Activated B cell treated with CpG ODN at 0.5 μM for 24 hours (primary cell): ENCODE measurements at regions of chr3 and their contacts with region 1.

Region 1: GRCh38 chr3:130892759-130893375 is 1.0 kb upstream of the ATP2C1 start:
- DNase-seq: no peak
- ATAC-seq: peak; percentile 43
- H3K4me3 Mint-ChIP-seq: peak overlapping the region; percentile 95
- H3K27ac Mint-ChIP-seq: peak overlapping the region; percentile 99
- H3K4me1 Mint-ChIP-seq: peaks cover 31% of the 10 kb centered on the region
- H3K27me3 Mint-ChIP-seq: peaks cover 1% of the 10 kb centered on the region
- CTCF ChIP-seq: peak; percentile 30

Region 2: GRCh38 chr3:130699765-130700164 is 193.1 kb before region 1 on chr3:
- CTCF ChIA-PET with region 1: no interaction called
- POLR2A ChIA-PET with region 1: no interaction called
- intact Hi-C with region 1: loop called (anchors 1 kb)
- DNase-seq: no peak
- ATAC-seq: no peak
- H3K4me3 Mint-ChIP-seq: no peak overlapping the region
- H3K27ac Mint-ChIP-seq: no peak overlapping the region
- H3K4me1 Mint-ChIP-seq: no peaks in the 10 kb centered on the region
- H3K27me3 Mint-ChIP-seq: no peaks in the 10 kb centered on the region
- CTCF ChIP-seq: no peak

Region 3: DNA sequence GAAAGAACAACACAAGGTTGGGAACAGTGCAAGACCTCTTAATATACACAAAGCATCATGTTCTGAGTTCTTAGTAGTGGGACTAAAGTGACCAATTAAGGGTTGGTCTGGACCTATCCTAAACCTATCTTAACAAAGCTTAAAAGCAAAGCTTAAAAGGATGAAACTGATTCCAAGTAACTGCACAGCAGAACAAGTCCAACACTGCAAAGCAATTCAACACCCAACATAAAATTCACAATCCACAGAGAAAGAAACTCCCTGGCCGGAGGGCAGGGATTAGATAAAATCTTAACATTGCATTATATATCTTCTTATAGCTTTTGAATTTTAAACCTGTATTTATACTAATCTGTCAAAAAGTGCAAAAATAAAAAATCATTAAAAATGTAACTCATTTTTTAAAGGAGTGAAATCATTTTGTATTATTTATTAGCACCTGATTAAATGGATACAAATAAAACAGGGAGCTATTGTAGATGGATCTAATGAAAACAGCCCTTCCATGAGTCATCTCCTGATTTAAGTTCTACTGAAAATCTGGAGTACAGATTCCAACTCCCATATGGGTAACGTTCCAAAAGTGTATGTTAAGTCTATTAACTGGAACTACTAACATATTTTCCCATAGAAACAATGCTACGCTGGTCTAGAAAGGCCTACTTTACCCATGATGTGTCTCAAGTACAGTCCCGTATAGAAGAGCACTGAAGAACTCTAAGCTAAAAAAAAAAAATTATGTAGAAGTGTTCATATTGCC is 181.1 kb before region 1 on chr3:
- CTCF ChIA-PET with region 1: no interaction called
- POLR2A ChIA-PET with region 1: no interaction called
- intact Hi-C with region 1: no loop called
- DNase-seq: no peak
- ATAC-seq: no peak
- H3K4me3 Mint-ChIP-seq: no peak overlapping the region
- H3K27ac Mint-ChIP-seq: no peak overlapping the region
- H3K4me1 Mint-ChIP-seq: no peaks in the 10 kb centered on the region
- H3K27me3 Mint-ChIP-seq: no peaks in the 10 kb centered on the region
- CTCF ChIP-seq: no peak

Region 4: GRCh38 chr3:130759699-130760338 is 133.0 kb before region 1 on chr3:
- CTCF ChIA-PET with region 1: interaction called, 20 read pairs
- POLR2A ChIA-PET with region 1: interaction called, 13 read pairs
- intact Hi-C with region 1: loop called (anchors 1 kb)
- DNase-seq: no peak
- ATAC-seq: peak; percentile 57
- H3K4me3 Mint-ChIP-seq: no peak overlapping the region
- H3K27ac Mint-ChIP-seq: no peak overlapping the region
- H3K4me1 Mint-ChIP-seq: no peaks in the 10 kb centered on the region
- H3K27me3 Mint-ChIP-seq: peaks cover 12% of the 10 kb centered on the region
- CTCF ChIP-seq: no peak

Region 5: DNA sequence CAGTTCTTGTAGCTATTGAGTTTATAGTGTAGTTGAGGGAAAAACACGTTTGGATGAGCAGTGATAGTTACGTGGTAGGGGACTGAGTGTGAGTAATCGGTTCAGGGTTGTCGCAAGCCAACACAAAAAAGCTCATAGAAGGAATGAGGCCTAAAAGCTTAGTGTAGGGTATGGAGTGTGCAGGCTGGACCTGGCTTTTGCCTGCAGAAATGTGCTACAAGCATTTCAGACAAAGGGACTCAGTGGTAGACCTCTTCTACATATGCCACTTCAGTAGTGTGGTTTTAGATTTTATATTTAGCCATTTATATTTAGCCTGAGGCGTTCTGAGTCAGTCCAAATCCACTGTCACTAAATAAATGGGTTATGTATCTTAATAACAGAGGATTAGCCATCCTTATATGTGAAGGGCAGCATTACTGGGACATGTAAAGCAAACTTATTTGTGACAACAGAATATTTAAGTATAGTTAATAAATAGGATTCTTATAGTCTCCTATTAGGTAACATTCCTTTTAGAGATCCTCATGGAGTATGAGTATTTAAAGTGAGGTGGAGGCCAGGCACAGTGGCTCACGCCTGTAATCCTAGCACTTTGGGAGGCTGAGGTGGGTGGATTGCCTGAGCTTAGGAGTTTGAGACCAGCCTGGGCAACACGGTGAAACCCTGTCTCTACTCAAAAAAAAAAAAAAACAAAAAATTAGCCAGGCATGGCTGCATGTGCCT is 22.9 kb after region 1 on chr3:
- CTCF ChIA-PET with region 1: interaction called, 5 read pairs
- POLR2A ChIA-PET with region 1: interaction called, 13 read pairs
- intact Hi-C with region 1: no loop called
- DNase-seq: no peak
- ATAC-seq: no peak
- H3K4me3 Mint-ChIP-seq: no peak overlapping the region
- H3K27ac Mint-ChIP-seq: no peak overlapping the region
- H3K4me1 Mint-ChIP-seq: peaks cover 48% of the 10 kb centered on the region
- H3K27me3 Mint-ChIP-seq: no peaks in the 10 kb centered on the region
- CTCF ChIP-seq: no peak

Region 6: DNA sequence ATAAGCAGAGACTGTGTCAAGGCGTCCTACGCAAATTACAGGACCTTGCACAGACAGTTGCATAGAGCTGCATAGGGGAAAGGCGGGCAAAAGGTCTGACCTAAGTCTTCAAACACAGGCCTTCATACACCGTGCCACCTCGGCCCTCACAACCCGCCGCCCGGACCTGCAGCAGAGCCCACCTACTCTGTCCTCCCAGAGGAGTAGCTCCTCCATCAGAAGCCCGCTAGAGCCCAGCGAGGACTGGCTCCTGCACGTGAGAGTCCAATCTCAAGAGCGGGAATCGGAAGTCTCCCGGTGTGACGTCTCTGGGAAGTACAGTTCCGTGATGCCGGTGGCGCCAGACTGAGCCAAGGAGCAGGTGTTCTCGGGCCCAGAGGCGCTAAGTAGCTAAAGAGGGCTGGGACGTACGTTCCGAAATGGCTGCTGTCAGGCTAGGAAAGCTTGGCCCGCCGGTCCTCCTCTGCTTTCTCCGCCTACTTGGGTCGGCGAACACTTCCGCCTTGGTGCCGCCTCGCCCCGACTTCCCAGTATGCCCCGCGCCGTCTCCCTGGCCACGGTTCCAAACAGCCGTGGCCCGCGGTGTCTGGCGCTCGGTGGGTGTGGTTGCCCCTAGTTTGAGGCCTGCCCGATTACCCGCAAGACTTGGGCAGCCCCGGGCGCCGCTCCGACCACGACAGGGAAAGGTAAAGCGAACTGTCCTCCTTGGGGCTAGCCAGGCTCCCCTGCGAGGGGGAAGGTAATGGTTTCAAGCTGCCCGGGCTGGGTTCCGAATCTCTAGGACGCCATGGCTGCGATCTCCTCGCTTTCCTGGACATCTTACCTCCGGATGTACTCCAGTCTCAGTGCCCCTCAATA is 133.7 kb after region 1 on chr3 and contains the starts of genes ASTE1 and NEK11:
- CTCF ChIA-PET with region 1: interaction called, 6 read pairs
- POLR2A ChIA-PET with region 1: interaction called, 33 read pairs
- intact Hi-C with region 1: loop called (anchors 1 kb)
- DNase-seq: peak; percentile 89
- ATAC-seq: peak; percentile 97
- H3K4me3 Mint-ChIP-seq: peak within 1 kb of the TSS; percentile 96
- H3K27ac Mint-ChIP-seq: peak within 1 kb of the TSS; percentile 97
- H3K4me1 Mint-ChIP-seq: peaks cover 52% of the 10 kb centered on the region
- H3K27me3 Mint-ChIP-seq: no peaks in the 10 kb centered on the region
- CTCF ChIP-seq: no peak
- total RNA-seq, gene ASTE1: 15.6 and 16.9 TPM in 2 replicates
- total RNA-seq, gene NEK11: 1.5 and 1.9 TPM in 2 replicates

Region 7: DNA sequence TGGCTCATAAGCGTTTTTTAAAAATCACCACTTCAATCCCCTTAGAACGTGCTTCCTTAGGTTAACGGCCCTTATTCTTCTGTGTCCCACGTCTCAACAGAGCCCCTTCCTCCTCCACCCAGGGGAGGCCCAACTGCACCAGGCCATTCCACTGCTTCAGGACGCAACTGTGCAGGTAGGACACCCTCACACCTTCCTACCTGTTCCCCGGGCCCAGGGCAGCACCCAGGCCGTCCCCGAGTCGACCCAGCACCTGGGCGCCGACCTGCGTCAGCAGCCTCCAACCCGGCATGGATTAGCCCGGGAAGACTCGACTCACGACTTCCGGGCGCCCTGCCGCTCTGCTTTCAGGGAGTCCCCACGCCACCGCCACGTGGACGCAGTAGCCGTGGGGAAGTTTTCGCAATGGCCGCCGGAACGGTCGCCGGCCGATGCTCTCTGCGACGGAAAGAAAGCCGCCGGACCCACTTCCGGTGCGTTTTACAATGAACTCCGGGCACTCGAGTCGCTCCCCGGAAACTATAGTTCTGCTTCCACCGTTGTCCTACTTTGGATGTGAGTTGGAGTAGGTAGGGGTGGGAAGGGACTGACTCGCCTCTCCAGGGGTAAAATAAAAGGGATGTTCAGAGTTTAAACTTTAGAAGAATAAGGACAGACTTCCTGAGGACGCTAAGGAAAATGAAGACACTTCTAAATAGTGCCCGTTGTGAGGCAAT is 609.8 kb after region 1 on chr3 and contains the start of gene MRPL3:
- CTCF ChIA-PET with region 1: no interaction called
- POLR2A ChIA-PET with region 1: interaction called, 5 read pairs
- intact Hi-C with region 1: loop called (anchors 2 kb)
- DNase-seq: peak; percentile 73
- ATAC-seq: peak; percentile 92
- H3K4me3 Mint-ChIP-seq: peak within 1 kb of the TSS; percentile 98
- H3K27ac Mint-ChIP-seq: peak within 1 kb of the TSS; percentile 93
- H3K4me1 Mint-ChIP-seq: peaks cover 38% of the 10 kb centered on the region
- H3K27me3 Mint-ChIP-seq: peaks cover 3% of the 10 kb centered on the region
- CTCF ChIP-seq: no peak
- total RNA-seq, gene MRPL3: 79.9 and 81.7 TPM in 2 replicates